Breast epithelium (tissue), 4 donors: ENCODE measurements at regions of chr5 and their contacts with region 1.

Region 1: GRCh38 chr5:179135441-179136105 is 75.4 kb downstream of the ZNF354C start:
- DNase-seq: no peak
- H3K4me3 ChIP-seq: no peak overlapping the region
- H3K27ac ChIP-seq: no peak overlapping the region
- H3K4me1 ChIP-seq: no peaks in the 10 kb centered on the region
- H3K27me3 ChIP-seq: no peaks in the 10 kb centered on the region
- CTCF ChIP-seq: no peak
- POLR2A ChIP-seq: no peak

Region 2: DNA sequence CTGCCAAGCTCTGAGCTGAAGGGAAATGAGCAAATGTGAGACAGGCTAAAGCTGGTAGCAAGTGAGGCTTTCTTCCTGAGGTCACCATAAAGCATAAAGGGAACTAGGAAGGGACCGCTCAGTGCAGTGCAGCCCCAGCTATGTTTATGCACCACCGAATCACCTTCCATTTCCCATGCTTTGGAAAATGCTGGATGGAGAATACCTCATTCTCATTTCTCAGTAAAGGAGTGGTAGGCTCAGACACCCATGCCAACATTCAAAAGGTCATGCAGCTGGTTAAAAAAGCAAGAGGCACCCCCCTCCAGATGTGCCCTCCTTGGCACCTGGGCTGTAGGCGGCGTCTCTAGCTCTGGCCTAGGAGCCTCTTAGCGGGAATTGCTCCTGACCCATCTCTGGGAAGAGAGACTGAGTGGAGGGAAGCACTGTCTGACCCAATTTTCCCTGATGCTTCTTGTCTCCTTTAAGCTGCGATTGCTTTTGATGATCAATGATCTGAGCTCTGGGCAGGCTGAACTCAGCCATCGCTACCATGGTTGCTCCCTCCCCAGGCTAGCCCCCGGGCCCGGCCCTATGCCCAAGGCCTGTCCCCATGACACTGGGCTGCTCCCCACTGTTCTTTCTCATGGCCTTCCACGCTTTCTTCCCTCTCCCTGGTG is 16.7 kb before region 1 on chr5:
- intact Hi-C with region 1: loop called (anchors 1 kb)
- DNase-seq: peak in 1 of 2 donors; percentile 19
- H3K4me3 ChIP-seq: no peak overlapping the region
- H3K27ac ChIP-seq: no peak overlapping the region
- H3K4me1 ChIP-seq: no peaks in the 10 kb centered on the region
- H3K27me3 ChIP-seq: no peaks in the 10 kb centered on the region
- CTCF ChIP-seq: no peak
- POLR2A ChIP-seq: no peak

Region 3: GRCh38 chr5:179187229-179187678 is 51.7 kb after region 1 on chr5:
- intact Hi-C with region 1: no loop called
- DNase-seq: no peak
- H3K4me3 ChIP-seq: no peak overlapping the region
- H3K27ac ChIP-seq: no peak overlapping the region
- H3K4me1 ChIP-seq: no peaks in the 10 kb centered on the region
- H3K27me3 ChIP-seq: peaks cover 0 to 5% of the 10 kb centered on the region in 2 donors
- CTCF ChIP-seq: no peak
- POLR2A ChIP-seq: no peak